Activated CD4-positive, alpha-beta T cell treated with anti-CD3 and anti-CD28 coated beads, Interleukin-2, amount 10 ng/mL, durations not matched to agents 24 days and 14 days (primary cell): ENCODE measurements at regions of chr11 and their contacts with region 1.

Region 1: DNA sequence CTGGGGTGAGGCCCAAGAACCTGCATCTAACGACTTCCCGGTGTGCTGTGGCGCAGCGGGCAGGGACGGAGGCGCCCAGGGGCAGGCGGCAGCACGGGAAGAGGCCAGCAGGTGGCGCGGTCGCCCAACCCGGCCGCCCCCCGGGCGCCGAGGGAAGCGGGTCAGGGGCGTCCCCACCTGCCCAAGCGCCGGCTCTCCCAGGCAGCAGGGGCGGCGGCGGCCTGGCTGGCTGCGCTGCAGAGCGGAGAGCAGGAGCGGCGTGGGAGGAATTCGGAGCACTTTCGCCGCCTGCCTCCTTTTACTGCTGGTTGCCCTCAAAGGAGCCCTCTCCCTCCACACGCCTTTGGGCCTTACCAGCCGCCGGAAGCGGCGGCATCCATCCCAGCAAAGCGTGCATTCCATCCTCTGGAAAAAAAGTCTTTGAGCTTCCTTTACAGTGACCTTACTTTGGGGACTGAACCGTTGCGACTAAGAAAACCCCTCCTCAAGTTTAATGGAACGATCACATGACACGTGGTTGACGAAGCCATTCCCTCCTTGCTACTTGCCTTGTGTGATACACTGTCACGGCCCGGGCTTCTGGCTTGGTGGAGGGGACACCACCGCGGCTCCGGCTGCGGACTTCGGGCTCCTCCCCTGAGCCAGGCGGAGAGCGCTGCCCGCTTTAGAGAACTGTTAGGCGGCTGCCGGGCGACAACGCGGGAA is 106.8 kb upstream of the CLMP start:
- DNase-seq: peak; percentile 94
- H3K4me3 Mint-ChIP-seq: peak overlapping the region; percentile 73
- H3K27ac Mint-ChIP-seq: peak overlapping the region; percentile 93
- H3K4me1 Mint-ChIP-seq: peaks cover 45% of the 10 kb centered on the region
- H3K27me3 Mint-ChIP-seq: no peaks in the 10 kb centered on the region

Region 2: GRCh38 chr11:123338330-123339005 is 36.6 kb after region 1 on chr11:
- intact Hi-C with region 1: loop called (anchors 2 kb)
- DNase-seq: no peak
- H3K4me3 Mint-ChIP-seq: no peak overlapping the region
- H3K27ac Mint-ChIP-seq: no peak overlapping the region
- H3K4me1 Mint-ChIP-seq: peaks cover 6% of the 10 kb centered on the region
- H3K27me3 Mint-ChIP-seq: peaks cover 11% of the 10 kb centered on the region

Region 3: DNA sequence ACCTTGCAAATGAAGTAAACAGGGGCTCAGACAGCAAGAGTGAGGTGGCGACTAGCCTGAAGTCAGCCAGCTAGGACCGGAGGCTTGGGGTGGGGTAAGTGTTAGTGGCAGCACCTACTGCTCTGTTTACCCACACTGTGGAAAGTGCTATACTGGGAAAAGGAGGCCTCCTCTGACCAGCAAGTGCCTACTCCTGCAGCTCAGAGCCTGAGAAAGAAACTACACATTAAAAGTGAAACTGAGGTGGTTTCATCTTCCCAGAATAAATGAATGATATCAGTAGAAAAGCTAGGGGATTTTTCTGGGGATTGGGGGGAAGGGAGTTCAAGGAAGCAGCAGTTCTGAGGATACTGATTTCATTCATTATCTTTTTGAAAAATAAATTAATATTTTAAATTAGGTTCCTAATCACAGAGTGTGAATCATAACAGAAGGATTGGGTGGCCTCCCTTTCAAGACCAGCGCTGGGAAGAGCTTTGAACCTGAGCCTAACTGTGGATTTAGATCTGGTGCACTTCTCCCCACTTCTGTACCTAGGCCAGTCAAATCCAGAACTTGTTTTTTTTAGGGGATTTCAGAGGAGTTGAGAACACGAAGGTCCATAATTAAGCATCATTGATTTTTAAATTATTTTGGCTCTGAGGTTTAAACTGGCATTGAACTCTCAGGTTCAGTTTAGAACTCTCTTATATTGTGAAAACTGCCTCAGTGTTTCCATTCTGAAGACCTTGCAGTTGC is 80.1 kb after region 1 on chr11:
- intact Hi-C with region 1: loop called (anchors 1 kb)
- DNase-seq: peak; percentile 89
- H3K4me3 Mint-ChIP-seq: peak overlapping the region; percentile 52
- H3K27ac Mint-ChIP-seq: no peak overlapping the region
- H3K4me1 Mint-ChIP-seq: peaks cover 42% of the 10 kb centered on the region
- H3K27me3 Mint-ChIP-seq: no peaks in the 10 kb centered on the region

Region 4: DNA sequence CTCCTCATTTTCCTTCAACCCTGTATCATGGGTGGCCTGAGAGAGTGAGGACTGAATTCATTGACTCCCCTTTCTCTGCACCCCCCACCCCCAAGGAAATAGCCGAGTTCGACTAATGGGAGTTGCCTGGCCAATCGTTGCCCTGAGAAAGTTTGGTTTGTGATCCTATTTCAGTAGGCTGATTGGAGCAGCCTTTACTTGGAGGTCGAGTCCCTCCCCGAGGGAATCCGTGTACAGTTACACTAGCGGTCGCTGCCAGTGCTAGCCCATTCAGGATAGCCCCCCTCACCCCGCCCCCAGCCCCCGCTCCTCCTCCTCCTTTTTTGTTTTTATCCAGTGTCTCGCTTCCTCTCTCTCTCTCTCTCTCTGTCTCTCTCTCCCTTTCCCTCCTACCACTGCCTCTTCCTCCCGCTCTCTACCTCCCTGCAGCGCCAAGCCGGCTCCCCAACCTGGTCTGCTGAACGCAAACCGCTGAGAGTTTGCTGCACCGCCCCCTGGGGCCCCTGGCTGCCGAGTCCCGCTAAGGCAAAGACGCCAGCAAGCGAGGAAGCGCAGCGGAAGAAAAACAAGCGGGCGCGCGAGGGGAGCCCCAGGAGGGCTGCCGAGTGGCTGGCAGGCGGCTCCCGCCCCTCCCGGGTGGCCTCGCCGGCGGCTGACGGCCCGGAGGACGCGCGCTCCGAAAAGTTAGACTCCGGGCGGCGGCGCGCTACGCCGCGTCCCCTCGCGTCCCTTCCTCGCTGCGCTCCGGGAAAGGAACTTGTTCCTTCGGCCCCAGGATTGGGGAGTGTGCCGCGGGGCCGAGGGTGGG is 128.3 kb after region 1 on chr11 and contains the start of gene GRAMD1B:
- intact Hi-C with region 1: loop called (anchors 1 kb)
- DNase-seq: peak; percentile 96
- H3K4me3 Mint-ChIP-seq: peak within 1 kb of the TSS; percentile 87
- H3K27ac Mint-ChIP-seq: peak within 1 kb of the TSS; percentile 90
- H3K4me1 Mint-ChIP-seq: peaks cover 55% of the 10 kb centered on the region
- H3K27me3 Mint-ChIP-seq: no peaks in the 10 kb centered on the region
- total RNA-seq, gene GRAMD1B: 117 TPM in 2 replicates

Region 5: GRCh38 chr11:123478352-123478987 is 176.6 kb after region 1 on chr11:
- intact Hi-C with region 1: loop called (anchors 1 kb)
- DNase-seq: peak; percentile 81
- H3K4me3 Mint-ChIP-seq: peak overlapping the region; percentile 43
- H3K27ac Mint-ChIP-seq: peak overlapping the region; percentile 78
- H3K4me1 Mint-ChIP-seq: peaks cover 55% of the 10 kb centered on the region
- H3K27me3 Mint-ChIP-seq: no peaks in the 10 kb centered on the region

Region 6: GRCh38 chr11:123590296-123590912 is 288.6 kb after region 1 on chr11:
- intact Hi-C with region 1: no loop called
- DNase-seq: no peak
- H3K4me3 Mint-ChIP-seq: no peak overlapping the region
- H3K27ac Mint-ChIP-seq: no peak overlapping the region
- H3K4me1 Mint-ChIP-seq: no peaks in the 10 kb centered on the region
- H3K27me3 Mint-ChIP-seq: no peaks in the 10 kb centered on the region